Head of caudate nucleus (tissue), 42 donors: ENCODE measurements at regions of chr13 and their contacts with region 1.

Region 1: GRCh38 chr13:60396783-60397703 is at the start of gene TDRD3:
- DNase-seq: peak; percentile 69 to 93 (median 84)

Region 2: GRCh38 chr13:60163478-60164233 is 233.4 kb before region 1 on chr13 and contains the start of gene DIAPH3:
- intact Hi-C with region 1: loop called (anchors 10 kb)
- DNase-seq: peak; percentile 93 to 99 (median 97)